PC-9 (cell line): ENCODE measurements at regions of chr7 and their contacts with region 1.

Region 1: DNA sequence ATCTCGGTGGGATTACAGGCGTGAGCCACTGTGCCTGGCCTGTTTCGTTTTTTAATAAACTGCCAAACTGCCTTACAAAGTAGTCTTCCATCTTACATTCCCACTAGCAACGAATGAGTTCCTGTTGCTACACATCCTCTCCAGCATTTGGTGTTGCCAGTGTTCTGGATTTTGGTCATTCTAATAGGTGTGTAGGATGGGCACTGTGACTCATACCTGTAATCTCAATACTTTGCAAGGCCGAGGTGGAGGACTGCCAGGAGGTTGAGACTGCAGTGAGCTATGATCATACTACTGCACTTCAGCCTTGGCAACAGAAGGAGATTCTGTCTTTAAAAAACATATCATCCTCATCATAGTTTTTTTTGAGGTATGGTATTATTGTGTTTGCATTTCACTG is 21.4 kb upstream of the RSBN1L start:
- DNase-seq: peak; percentile 65 to 77
- H3K4me3 ChIP-seq: no peak overlapping the region
- H3K27ac ChIP-seq: no peak overlapping the region
- H3K4me1 ChIP-seq: peaks cover 17% of the 10 kb centered on the region
- H3K27me3 ChIP-seq: no peaks in the 10 kb centered on the region
- CTCF ChIP-seq: no peak

Region 2: GRCh38 chr7:77696198-77697028 is 21.5 kb after region 1 on chr7 and contains the start of gene RSBN1L:
- CTCF ChIA-PET with region 1: no interaction called
- POLR2A ChIA-PET with region 1: interaction called, 6 read pairs
- intact Hi-C with region 1: loop called (anchors 2 kb)
- DNase-seq: peak; percentile 90 to 99
- H3K4me3 ChIP-seq: peak within 1 kb of the TSS; percentile 89
- H3K27ac ChIP-seq: peak within 1 kb of the TSS; percentile 51
- H3K4me1 ChIP-seq: peaks cover 32% of the 10 kb centered on the region
- H3K27me3 ChIP-seq: no peaks in the 10 kb centered on the region
- CTCF ChIP-seq: no peak
- total RNA-seq, gene RSBN1L: 13.3 and 20.7 TPM in 2 replicates

Region 3: GRCh38 chr7:77759294-77759889 is 84.5 kb after region 1 on chr7:
- CTCF ChIA-PET with region 1: no interaction called
- POLR2A ChIA-PET with region 1: no interaction called
- intact Hi-C with region 1: loop called (anchors 5 kb)
- DNase-seq: peak; percentile 40 to 55
- H3K4me3 ChIP-seq: no peak overlapping the region
- H3K27ac ChIP-seq: no peak overlapping the region; the same call in 1 of the 2 replicates
- H3K4me1 ChIP-seq: 0 out of 2 replicates have a peak, but pooled peaks cover 3% of the 10 kb centered on the region
- H3K27me3 ChIP-seq: no peaks in the 10 kb centered on the region
- CTCF ChIP-seq: peak; percentile 92